OCI-LY7 (cell line): ENCODE measurements at regions of chr12 and their contacts with region 1.

Region 1: DNA sequence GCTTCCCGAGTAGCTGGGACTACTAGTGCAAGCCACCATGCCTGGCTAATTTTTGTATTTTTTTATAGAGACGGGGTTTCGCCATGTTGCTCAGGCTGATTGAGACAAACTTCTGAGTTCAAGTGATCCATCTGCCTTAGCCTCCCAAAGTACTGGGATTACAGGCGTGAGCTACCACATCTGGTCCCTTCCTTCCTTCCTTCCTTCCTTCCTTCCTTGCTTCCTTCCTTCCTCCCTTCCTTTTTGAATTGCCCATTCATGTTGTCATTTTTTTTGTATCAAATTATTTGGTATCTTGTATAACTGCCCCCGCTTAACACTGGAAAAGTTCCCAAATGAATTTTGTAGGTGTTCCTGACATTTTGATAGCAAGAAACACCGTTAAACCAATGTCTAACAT is 11.7 kb downstream of the RAD9B start:
- DNase-seq: no peak
- H3K4me3 ChIP-seq: no peak overlapping the region
- H3K27ac ChIP-seq: no peak overlapping the region
- H3K4me1 ChIP-seq: no peaks in the 10 kb centered on the region
- CTCF ChIP-seq: no peak

Region 2: DNA sequence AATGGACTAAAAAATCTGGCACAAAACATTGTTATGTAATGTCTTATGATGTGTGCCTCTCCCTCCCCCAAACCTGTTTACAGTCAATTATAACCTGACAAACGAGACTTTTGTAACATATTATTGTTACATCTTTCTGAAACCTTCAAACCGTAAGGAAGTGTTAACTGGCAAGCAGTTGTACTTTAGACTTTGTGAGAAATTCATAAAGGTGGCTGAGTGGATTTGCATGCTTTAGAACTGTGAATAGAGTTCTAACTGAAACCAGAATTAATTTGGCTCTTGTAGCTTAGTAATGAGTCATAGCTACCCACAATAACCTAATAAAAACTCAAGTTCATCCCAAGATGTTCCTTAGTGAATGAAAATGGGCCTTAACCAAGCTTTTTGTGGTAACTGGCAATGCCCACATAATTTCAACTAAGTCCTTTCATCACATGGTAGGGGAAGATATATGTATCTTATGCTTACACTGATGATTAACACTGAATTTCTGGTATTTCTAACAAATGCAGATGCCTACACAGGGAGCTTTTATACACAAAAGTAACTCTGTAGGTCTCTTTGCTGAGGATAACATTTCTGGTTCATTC is 18.0 kb after region 1 on chr12:
- CTCF ChIA-PET with region 1: interaction called, 3 read pairs
- POLR2A ChIA-PET with region 1: interaction called, 18 read pairs
- intact Hi-C with region 1: no loop called
- DNase-seq: no peak
- H3K4me3 ChIP-seq: no peak overlapping the region
- H3K27ac ChIP-seq: peak overlapping the region; percentile 17
- H3K4me1 ChIP-seq: peaks cover 35% of the 10 kb centered on the region
- CTCF ChIP-seq: no peak

Region 3: GRCh38 chr12:110555577-110556406 is 42.0 kb after region 1 on chr12:
- CTCF ChIA-PET with region 1: no interaction called
- POLR2A ChIA-PET with region 1: no interaction called
- intact Hi-C with region 1: no loop called
- DNase-seq: no peak
- H3K4me3 ChIP-seq: no peak overlapping the region
- H3K27ac ChIP-seq: no peak overlapping the region
- H3K4me1 ChIP-seq: peaks cover 3% of the 10 kb centered on the region
- CTCF ChIP-seq: no peak

Region 4: GRCh38 chr12:110698171-110698902 is 184.5 kb after region 1 on chr12:
- CTCF ChIA-PET with region 1: no interaction called
- POLR2A ChIA-PET with region 1: interaction called, 3 read pairs
- intact Hi-C with region 1: loop called (anchors 2 kb)
- DNase-seq: peak; percentile 93
- H3K4me3 ChIP-seq: no peak overlapping the region
- H3K27ac ChIP-seq: no peak overlapping the region
- H3K4me1 ChIP-seq: peaks cover 22% of the 10 kb centered on the region
- CTCF ChIP-seq: peak; percentile 85

Region 5: DNA sequence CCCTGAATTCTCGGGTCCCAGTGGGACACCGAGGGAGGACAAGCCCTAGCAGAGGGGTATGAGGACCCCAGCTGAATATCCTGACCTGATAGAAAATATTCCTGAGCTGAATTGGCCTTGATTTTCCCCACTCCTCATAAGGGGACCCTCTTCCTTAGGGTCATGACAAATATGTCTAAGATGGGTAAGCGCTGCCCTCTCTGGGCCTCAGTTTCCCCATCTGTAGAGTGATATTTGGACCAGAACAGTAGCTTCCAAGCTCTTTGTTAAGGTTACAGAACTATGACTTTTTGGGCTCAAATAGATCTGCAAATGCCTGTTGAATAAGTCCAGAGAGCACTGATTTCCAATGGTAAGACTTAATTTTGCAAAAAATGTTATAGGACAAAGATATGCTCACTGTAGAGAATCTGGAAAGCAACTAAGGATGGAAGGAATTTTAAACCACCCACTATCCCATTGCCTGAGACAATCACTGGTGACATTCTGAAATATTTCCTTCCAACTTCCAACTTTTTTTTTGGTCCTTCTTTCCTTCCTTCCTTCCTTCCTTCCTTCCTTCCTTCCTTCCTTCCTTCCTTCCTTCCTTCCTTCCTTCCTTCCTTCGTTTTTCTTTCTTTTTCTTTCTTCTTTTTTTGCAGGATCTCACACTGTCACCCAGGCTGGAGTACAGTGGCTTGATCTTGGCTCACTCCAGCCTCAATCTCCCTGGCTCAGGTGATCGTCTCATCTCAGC is 374.6 kb after region 1 on chr12:
- CTCF ChIA-PET with region 1: no interaction called
- POLR2A ChIA-PET with region 1: no interaction called
- intact Hi-C with region 1: no loop called
- DNase-seq: no peak
- H3K4me3 ChIP-seq: no peak overlapping the region
- H3K27ac ChIP-seq: no peak overlapping the region
- H3K4me1 ChIP-seq: no peaks in the 10 kb centered on the region
- CTCF ChIP-seq: peak; percentile 49; the same call in 1 of the 2 replicates